Naive thymus-derived CD4-positive, alpha-beta T cell (primary cell): ENCODE measurements at regions of chr13 and their contacts with region 1.

Region 1: DNA sequence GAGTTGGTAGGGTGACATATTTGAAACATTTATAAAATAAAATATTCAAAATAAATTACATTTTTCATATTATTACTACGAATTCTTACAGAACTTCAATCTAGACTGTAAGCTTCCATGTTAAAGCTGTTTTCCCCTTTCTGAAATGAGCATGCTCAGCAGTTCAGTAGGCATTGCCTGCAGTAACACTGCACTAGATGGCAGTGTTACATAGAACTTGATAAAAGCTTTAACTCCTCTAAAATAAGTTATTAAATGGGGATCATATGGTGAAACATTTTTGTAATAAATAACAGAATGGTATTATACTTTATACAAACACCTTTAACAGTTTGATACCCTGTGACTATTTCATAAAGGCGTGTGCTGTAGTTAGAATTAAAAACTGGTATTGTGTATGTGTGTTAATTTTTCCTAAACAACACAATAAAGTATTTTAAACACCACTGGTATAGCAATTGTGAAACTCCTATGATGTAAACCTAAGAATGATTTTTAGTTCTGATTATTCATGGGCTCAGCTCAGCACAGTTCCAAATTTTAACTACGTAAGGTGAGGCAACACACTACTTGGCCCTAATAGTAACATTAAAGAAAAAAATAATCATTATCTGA is 11.6 kb upstream of the GPR18 start:
- DNase-seq: peak in 7 of 9 donors; percentile 51 to 71 (median 58)
- ATAC-seq: peak; percentile 84
- H3K4me3 ChIP-seq: no peak overlapping the region
- H3K4me3 Mint-ChIP-seq: peak overlapping the region in 1 of 10 donors; percentile 52
- H3K27ac ChIP-seq: peak overlapping the region; percentile 46
- H3K27ac Mint-ChIP-seq: peak overlapping the region in 8 of 9 donors; percentile 63 to 94 (median 92)
- H3K4me1 ChIP-seq: peaks cover 38 to 54% of the 10 kb centered on the region in 2 donors
- H3K4me1 Mint-ChIP-seq: peaks cover 35 to 73% (median 65%) of the 10 kb centered on the region in 7 donors
- H3K27me3 ChIP-seq: no peaks in the 10 kb centered on the region
- H3K27me3 Mint-ChIP-seq: no peaks in the 10 kb centered on the region

Region 2: DNA sequence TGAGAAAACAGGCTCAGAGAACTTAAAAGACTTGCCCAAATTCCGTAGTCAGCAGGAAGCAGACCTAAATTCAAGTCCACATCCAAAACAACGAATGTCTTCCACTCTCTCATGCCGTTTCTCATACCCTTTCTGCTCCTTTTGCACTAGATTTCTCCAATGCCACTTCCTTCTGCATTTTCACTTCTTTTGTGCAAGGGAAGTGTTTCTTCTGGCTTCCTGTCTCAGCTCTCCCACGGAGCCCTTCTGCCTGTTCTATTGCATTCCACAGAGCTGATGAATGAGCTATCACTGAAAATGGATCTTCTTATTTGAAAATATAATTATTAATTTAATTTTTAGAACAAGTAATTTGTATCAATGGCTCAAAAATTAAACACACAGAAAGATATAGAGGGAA is 636.8 kb before region 1 on chr13:
- CTCF ChIA-PET with region 1: no interaction called
- POLR2A ChIA-PET with region 1: no interaction called
- intact Hi-C with region 1: no loop called
- DNase-seq: no peak
- ATAC-seq: no peak
- H3K4me3 ChIP-seq: no peak overlapping the region
- H3K4me3 Mint-ChIP-seq: no peak overlapping the region
- H3K27ac ChIP-seq: no peak overlapping the region
- H3K27ac Mint-ChIP-seq: no peak overlapping the region
- H3K4me1 ChIP-seq: no peaks in the 10 kb centered on the region
- H3K4me1 Mint-ChIP-seq: peaks cover 0 to 6% (median 4%) of the 10 kb centered on the region in 7 donors
- H3K27me3 ChIP-seq: no peaks in the 10 kb centered on the region
- H3K27me3 Mint-ChIP-seq: peaks cover 0 to 21% (median 0%) of the 10 kb centered on the region in 5 donors

Region 3: DNA sequence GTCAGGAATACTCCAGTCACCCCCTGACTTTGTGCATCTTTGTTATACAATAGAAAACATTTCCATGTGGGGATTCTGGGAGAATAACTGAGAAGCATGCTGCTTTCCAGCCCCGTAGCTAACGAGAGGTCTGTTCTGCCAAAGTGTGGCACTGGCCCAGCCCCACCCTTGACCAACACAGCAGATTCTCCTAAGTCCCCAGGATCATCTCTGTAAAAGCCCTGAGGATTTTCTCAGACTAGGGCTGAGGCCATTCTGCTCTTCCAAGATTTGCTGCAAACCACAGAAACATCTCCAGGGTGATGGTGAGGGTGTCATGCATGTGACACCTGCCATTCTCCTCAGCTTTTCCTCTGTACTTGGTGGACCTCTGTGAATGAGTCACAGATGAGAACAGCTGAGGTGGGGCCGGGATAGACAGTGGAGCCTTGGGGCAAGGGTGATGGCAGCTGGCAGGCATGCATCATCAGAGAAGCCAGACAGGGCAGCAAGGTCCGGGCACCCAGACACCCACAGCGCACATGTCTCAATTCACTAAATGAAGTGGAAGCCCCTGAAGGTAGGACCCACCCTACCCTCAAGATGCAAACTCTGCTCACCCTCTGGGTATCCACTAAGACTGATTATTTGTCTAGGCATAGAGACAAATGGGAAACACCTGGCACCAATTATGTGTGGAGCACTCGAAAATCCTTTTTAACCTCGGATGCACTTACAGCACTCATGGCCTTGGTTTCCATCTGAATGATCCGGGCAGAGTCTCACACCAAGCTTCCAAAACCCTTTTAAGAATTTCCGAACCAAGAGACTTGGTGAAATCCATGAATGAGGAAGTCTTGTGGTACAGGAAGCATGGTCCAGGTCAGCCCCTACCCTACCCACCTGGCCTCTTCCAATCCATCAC is 271.7 kb before region 1 on chr13:
- CTCF ChIA-PET with region 1: no interaction called
- POLR2A ChIA-PET with region 1: no interaction called
- intact Hi-C with region 1: loop called in 1 of 2 experiments (anchors 10 kb)
- DNase-seq: no peak
- ATAC-seq: no peak
- H3K4me3 ChIP-seq: no peak overlapping the region
- H3K4me3 Mint-ChIP-seq: peak overlapping the region; percentile 46 to 84 (median 72)
- H3K27ac ChIP-seq: peak overlapping the region; percentile 90
- H3K27ac Mint-ChIP-seq: peak overlapping the region; percentile 44 to 99 (median 96)
- H3K4me1 ChIP-seq: peaks cover 33 to 89% of the 10 kb centered on the region in 2 donors
- H3K4me1 Mint-ChIP-seq: peaks cover 60 to 100% (median 99%) of the 10 kb centered on the region in 7 donors
- H3K27me3 ChIP-seq: no peaks in the 10 kb centered on the region
- H3K27me3 Mint-ChIP-seq: no peaks in the 10 kb centered on the region

Region 4: GRCh38 chr13:99214232-99214631 is 55.5 kb before region 1 on chr13:
- CTCF ChIA-PET with region 1: interaction called, 16 read pairs
- POLR2A ChIA-PET with region 1: interaction called, 10 read pairs
- intact Hi-C with region 1: loop called in 1 of 2 experiments (anchors 1 kb)
- DNase-seq: peak in 4 of 9 donors; percentile 34 to 53 (median 46)
- ATAC-seq: no peak
- H3K4me3 ChIP-seq: peak overlapping the region; percentile 53
- H3K4me3 Mint-ChIP-seq: peak overlapping the region; percentile 69 to 95 (median 92)
- H3K27ac ChIP-seq: peak overlapping the region; percentile 85
- H3K27ac Mint-ChIP-seq: peak overlapping the region; percentile 94 to 100 (median 99)
- H3K4me1 ChIP-seq: peaks cover 46 to 67% of the 10 kb centered on the region in 2 donors
- H3K4me1 Mint-ChIP-seq: peaks cover 49 to 93% (median 79%) of the 10 kb centered on the region in 7 donors
- H3K27me3 ChIP-seq: no peaks in the 10 kb centered on the region
- H3K27me3 Mint-ChIP-seq: no peaks in the 10 kb centered on the region

Region 5: DNA sequence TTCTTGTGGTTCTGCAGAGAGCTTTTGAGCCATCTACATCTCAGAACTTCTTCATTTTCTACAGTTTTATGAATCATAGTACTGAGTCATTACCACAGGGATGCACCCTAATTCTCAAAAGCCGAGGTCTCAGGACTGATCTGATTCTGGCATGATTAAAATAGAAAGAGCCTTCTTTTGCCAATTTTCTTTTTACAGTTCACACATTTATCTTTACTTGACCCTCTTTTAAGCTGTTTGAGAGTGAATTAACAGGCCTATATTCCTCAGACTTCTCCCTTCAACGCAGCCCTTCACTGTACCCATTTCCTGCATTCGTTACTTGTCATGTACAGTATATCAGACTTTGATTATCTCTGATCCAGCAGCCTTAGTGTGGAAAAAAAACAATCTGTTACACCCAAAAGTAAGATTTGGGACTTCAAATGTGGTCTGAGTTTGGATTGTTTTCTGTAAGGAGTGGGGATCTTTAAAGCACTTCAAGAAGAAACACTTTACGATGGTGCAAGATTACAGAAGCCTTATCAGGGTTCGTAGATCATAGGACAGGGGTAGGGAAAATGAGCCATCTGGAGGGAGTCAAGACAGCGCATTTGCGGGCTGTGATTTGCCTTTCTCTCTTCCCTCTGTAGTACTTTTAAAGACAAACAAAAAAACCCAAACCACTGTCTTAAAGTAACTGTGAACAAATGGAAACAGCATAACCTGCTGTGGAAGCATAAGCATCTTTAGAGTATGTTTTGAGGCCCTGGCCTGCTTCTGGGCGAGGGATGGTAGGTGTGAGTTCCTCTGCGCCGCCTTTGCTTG is 52.8 kb after region 1 on chr13:
- CTCF ChIA-PET with region 1: interaction called, 3 read pairs
- POLR2A ChIA-PET with region 1: interaction called, 3 read pairs
- intact Hi-C with region 1: loop called in 1 of 2 experiments (anchors 1 kb)
- DNase-seq: peak in 6 of 9 donors; percentile 35 to 64 (median 48)
- ATAC-seq: peak; percentile 81
- H3K4me3 ChIP-seq: peak overlapping the region; percentile 2
- H3K4me3 Mint-ChIP-seq: peak overlapping the region; percentile 51 to 84 (median 67)
- H3K27ac ChIP-seq: peak overlapping the region; percentile 77
- H3K27ac Mint-ChIP-seq: peak overlapping the region; percentile 88 to 99 (median 95)
- H3K4me1 ChIP-seq: peaks cover 65 to 66% of the 10 kb centered on the region in 2 donors
- H3K4me1 Mint-ChIP-seq: peaks cover 38 to 95% (median 75%) of the 10 kb centered on the region in 7 donors
- H3K27me3 ChIP-seq: no peaks in the 10 kb centered on the region
- H3K27me3 Mint-ChIP-seq: no peaks in the 10 kb centered on the region

Region 6: DNA sequence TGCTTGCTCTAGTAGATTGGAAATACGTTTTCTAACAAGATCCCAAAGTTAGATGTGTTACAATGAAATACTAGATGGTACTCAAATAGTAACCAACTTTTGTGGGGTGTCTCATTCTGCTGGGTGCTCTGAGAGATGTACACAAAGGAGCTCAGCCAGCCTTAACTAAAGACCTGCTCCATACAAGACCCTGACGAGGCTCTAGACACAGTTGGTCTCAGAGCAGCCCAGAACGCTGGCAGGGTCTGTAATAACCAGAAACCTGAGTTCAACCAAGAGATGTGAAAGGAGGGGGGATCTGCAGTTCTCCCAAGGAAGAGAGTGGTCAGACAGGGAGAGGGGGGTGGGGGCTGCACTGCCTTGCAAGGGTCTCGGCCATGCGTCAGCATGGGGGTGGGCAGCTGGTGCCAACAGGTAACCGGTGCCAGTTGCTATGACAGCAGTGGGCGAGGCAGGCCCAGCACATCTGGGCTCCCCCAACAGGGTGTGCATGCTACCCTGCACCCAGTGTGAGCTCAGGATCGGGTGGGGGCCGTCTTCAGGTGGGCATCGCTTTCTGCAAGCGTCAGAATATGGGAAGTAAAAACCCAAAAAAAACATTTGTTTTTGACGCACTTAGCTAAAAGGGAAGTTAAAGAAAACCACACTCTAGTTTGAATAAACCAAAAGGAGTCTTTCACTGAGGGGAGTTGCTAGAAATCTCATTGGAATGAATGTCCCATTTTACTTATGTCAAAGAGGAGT is 105.4 kb after region 1 on chr13:
- CTCF ChIA-PET with region 1: interaction called, 78 read pairs
- POLR2A ChIA-PET with region 1: interaction called, 6 read pairs
- intact Hi-C with region 1: no loop called
- DNase-seq: peak; percentile 20 to 93 (median 87)
- ATAC-seq: peak; percentile 94
- H3K4me3 ChIP-seq: peak overlapping the region; percentile 38
- H3K4me3 Mint-ChIP-seq: peak overlapping the region; percentile 50 to 87 (median 72)
- H3K27ac ChIP-seq: peak overlapping the region; percentile 88
- H3K27ac Mint-ChIP-seq: peak overlapping the region; percentile 87 to 100 (median 99)
- H3K4me1 ChIP-seq: peaks cover 67 to 84% of the 10 kb centered on the region in 2 donors
- H3K4me1 Mint-ChIP-seq: peaks cover 60 to 100% (median 95%) of the 10 kb centered on the region in 7 donors
- H3K27me3 ChIP-seq: no peaks in the 10 kb centered on the region
- H3K27me3 Mint-ChIP-seq: no peaks in the 10 kb centered on the region

Region 7: DNA sequence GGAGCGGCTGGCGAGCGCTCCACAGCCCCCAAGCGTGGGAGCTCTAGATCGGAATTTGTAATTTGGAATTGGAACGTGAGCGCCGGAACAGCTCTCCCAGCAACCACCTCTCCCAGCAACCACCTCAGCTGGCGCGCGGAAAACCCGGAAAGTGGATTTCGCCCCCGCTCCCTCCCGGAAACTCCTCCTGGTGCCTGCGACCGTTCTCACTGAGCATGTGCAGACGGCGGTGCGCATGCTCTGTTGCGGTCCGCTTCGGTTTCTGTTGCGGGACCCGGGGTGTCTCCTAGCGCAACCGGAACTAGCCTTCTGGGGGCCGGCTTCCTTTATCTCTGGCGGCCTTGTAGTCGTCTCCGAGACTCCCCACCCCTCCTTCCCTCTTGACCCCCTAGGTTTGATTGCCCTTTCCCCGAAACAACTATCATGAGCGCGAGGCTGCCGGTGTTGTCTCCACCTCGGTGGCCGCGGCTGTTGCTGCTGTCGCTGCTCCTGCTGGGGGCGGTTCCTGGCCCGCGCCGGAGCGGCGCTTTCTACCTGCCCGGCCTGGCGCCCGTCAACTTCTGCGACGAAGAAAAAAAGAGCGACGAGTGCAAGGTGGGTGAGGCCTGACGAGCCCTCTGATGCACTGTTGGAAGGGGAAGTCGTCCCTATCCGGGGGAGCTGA is 231.6 kb after region 1 on chr13 and contains the start of gene TM9SF2:
- CTCF ChIA-PET with region 1: interaction called, 3 read pairs
- POLR2A ChIA-PET with region 1: interaction called, 5 read pairs
- intact Hi-C with region 1: loop called in 1 of 2 experiments (anchors 1 kb)
- DNase-seq: peak; percentile 94 to 98 (median 96)
- ATAC-seq: peak; percentile 70
- H3K4me3 ChIP-seq: peak within 1 kb of the TSS; percentile 93
- H3K4me3 Mint-ChIP-seq: peak within 1 kb of the TSS; percentile 94 to 100 (median 97)
- H3K27ac ChIP-seq: peak within 1 kb of the TSS; percentile 94
- H3K27ac Mint-ChIP-seq: peak within 1 kb of the TSS; percentile 96 to 99 (median 98)
- H3K4me1 ChIP-seq: peaks cover 47 to 65% of the 10 kb centered on the region in 2 donors
- H3K4me1 Mint-ChIP-seq: peaks cover 57 to 93% (median 85%) of the 10 kb centered on the region in 7 donors
- H3K27me3 ChIP-seq: no peaks in the 10 kb centered on the region
- H3K27me3 Mint-ChIP-seq: peaks cover 0 to 4% (median 0%) of the 10 kb centered on the region in 5 donors
- total RNA-seq, gene TM9SF2: 38.0 to 76.3 (median 53.1) TPM

Region 8: DNA sequence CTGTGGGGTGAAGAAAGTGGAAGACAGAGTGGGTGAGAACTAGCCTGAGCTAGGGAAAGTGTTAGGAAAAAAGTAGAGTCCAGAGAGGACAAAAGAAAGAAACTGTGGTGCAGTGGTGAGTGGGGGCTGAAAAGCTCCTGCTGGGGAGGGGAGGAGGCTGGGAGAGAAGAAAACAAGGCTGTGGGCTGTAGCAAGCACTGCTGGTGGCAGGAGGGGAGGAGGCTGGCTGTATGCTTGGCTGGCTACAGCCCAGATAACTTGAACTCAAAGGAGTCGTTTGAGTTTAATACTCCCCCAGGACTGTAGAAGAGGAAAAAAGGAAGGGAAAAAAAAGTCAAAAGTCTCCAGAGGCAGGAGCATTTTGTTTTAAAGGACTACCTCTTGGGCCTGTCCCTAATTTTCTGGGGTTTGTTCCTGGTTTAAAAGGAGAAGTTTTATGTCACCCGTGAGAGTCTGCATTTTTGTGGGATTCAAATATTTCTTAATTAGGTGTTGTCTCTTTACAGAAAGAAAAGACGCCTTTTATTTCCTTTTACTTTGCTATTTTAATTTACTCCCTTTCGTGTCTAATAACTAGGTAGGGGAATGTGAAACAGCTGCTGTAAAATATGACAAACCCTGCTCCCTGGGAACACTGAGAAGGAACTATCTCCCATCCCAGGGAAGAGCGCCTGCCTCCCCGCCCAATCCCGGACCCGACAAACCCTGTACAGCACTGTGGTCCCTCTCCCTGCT is 680.1 kb after region 1 on chr13:
- CTCF ChIA-PET with region 1: no interaction called
- POLR2A ChIA-PET with region 1: no interaction called
- intact Hi-C with region 1: no loop called
- DNase-seq: no peak
- ATAC-seq: no peak
- H3K4me3 ChIP-seq: no peak overlapping the region
- H3K4me3 Mint-ChIP-seq: no peak overlapping the region
- H3K27ac ChIP-seq: no peak overlapping the region
- H3K27ac Mint-ChIP-seq: no peak overlapping the region
- H3K4me1 ChIP-seq: no peaks in the 10 kb centered on the region
- H3K4me1 Mint-ChIP-seq: peaks cover 0 to 2% (median 0%) of the 10 kb centered on the region in 7 donors
- H3K27me3 ChIP-seq: peaks cover 0 to 6% of the 10 kb centered on the region in 2 donors
- H3K27me3 Mint-ChIP-seq: peaks cover 49 to 77% (median 61%) of the 10 kb centered on the region in 5 donors